ENCODE measurements at regions of chr12 and their contacts with region 1.

Region 1: GRCh38 chr12:132887513-132888351 is at the start of gene CHFR:
- DNase-seq: peak; percentile 92 to 100 (median 96)

Region 2: DNA sequence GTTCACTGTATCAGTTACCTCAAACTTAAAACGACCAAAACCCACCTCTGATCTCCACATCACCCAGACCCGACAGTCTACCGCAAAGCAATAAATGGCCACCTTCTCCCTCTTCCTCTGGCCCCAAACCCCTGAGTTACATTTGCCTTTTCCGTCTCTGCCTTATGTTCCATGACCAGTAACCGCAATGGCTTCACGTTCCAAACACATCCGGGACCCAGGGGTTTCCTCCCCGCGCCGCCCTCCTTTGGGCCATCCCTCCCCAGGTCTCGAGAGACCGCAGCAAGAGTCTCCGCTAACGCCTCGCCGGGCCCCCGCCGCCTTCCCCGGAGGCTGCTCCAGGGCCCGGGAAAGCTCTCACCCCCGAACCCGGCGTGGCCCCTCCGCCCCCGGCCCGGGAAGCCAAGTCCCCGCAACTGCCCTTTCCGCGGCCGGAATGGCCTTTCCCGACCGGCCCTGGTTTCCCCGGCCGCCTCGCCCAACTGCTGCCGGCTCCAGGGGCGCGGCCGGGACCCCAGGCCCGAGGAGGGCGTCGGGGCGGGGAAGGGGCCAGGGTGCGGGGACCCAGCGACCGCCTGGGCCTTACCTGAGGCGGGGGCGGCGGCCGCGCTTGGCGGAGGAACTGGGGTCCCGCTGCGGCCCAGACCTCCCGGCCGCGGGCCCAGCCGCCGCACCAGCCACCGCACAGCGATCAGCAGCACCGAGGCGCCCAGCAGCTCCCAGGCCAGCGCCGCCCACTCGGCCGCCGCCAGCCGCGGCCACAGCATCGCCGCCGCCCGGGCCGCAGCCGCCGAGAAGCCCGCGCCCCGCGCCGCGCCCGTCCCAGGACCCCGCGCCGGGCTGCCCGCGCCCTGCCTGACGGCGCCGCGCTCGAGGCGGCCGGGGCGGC is 126.5 kb before region 1 on chr12 and contains the start of gene ANKLE2:
- intact Hi-C with region 1: loop called (anchors 5 kb)
- DNase-seq: peak in 3 of 10 donors; percentile 10 to 91 (median 80)

Region 3: DNA sequence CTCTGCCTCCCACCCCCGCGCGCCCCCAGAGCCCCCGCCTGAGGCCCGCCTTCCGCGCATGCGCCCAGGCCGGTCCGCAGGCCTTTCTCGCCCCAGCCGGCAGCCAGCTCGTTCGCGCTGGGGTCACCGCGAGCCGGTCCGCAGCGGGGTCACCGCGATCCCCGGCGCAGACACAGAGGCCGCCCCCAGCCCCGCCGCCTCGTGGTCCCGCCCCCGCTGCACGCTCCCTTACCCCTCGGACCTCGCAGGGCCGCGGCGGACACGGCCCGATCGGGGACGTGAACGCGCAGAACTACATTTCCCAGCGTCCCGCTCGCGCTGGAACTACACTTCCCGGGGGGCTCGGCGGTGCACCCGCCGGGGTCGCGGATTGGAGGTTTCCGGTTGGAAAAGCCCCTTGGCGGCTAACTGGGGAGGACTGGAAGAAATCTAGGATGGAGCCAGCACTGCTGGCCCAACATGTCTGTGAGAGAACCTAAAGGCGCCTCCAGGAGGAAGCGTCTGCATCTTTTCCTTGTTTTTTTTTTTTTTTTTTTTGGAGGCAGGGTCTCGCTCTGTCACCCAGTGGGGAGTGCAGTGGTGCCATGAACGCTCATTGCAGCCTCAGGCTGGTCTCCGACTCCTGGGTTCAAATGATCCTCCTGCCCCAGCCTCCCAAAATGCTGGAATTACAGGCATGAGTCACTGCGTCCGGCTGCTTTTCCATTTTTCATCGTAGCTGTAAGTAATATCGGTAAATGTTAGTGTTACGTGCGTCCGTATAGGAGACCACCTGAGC is 68.5 kb after region 1 on chr12 and contains the start of gene ZNF605:
- intact Hi-C with region 1: loop called (anchors 5 kb)
- DNase-seq: peak; percentile 84 to 99 (median 92)